GM12878 (cell line): ENCODE measurements at regions of chr19 and their contacts with region 1.

Region 1: DNA sequence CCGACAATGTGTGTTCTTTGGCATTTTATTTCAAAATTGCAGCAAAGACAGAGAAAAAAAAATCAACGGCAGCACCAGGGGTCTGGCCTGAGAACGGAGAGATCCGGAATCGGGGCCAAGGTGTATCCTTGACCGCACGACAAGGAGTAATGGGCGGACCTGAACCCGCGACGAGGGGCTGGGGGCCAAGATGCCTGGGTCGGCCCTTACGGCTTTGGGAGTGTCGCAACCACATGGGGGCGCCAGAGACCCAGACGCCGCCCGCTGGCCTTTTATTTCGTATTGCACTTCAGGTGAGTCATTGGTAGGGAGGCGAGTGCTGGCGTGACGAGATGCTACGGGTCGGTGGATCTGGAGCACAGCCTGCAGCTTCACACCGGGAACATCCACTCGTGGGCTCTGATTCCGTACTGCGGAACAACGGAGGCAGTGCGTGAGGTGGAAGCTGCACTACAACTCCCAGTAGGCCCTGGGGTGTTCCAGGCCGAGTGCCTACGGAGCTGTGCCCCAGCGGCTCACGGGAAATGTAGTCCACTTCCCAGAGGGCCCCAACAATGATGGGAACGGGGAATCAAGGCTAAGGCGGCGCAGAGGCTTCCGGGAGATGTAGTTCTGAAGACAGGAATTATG is 15.7 kb downstream of the BCAT2 start:
- DNase-seq: peak; percentile 76
- ATAC-seq: peak; percentile 98
- H3K4me3 ChIP-seq: peak overlapping the region; percentile 67; the same call in 1 of the 2 replicates
- H3K27ac ChIP-seq: no peak overlapping the region
- H3K4me1 ChIP-seq: peaks cover 6% of the 10 kb centered on the region
- H3K27me3 ChIP-seq: no peaks in the 10 kb centered on the region
- CTCF ChIP-seq: peak; percentile 87 to 93 (median 91); a peak in 5 of 6 replicates
- EP300 ChIP-seq: no peak; a peak in 1 of 4 replicates
- POLR2A ChIP-seq: peak; percentile 62
- RAD21 ChIP-seq: peak; percentile 84

Region 2: DNA sequence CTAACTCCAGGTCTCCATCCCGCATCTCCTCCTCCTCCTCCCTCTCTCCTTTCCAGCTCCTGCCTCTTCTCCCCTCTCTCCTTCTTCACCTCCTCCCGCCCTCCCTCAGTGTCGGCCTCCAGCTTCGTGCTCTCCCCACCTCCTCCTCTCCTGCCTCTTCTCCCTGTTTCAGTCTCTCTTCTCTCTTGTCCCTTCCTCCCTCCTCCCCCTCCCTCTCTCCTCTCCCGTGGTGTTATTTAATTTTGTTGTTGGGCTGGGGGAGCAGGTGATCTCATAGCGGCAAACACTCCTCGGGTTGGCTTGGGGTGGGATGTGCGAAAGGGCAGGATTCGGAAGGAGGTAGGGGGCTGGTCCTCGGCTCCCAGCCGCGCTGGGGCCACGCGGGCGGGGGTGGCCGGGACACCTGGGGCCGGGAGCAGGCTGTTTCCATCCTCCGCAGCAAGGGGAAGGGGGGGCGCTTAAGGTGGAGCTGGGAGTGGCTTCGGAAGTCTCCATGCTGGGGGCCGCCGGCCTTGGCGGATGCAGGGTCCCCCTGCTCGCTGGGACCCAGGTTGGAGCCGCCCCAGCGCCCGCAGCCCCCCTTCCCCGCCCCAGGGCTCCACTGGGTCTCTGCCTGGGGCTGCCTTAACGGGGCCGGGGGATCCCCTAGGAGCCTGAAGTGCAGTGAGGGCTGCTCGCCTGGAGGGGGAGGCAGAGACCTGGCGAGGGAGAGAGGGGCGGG is 149.0 kb before region 1 on chr19 and contains the start of gene CA11:
- CTCF ChIA-PET with region 1: interaction called, 27 read pairs
- POLR2A ChIA-PET with region 1: interaction called, 4 read pairs
- RAD21 ChIA-PET with region 1: interaction called, 9 read pairs
- SMC1A ChIA-PET with region 1: interaction called, 5 read pairs
- in situ Hi-C with region 1: no loop called
- intact Hi-C with region 1: no loop called
- DNase-seq: no peak
- ATAC-seq: peak; percentile 93
- H3K4me3 ChIP-seq: peak within 1 kb of the TSS; percentile 91
- H3K27ac ChIP-seq: peak within 1 kb of the TSS; percentile 15; the same call in 1 of the 2 replicates
- H3K4me1 ChIP-seq: peaks cover 20% of the 10 kb centered on the region
- H3K27me3 ChIP-seq: no peaks in the 10 kb centered on the region
- CTCF ChIP-seq: peak; percentile 79 to 98 (median 96); a peak in 5 of 6 replicates
- EP300 ChIP-seq: no peak
- POLR2A ChIP-seq: peak; percentile 40; the same call in 1 of the 2 replicates
- RAD21 ChIP-seq: peak; percentile 97
- polyA plus RNA-seq, gene CA11: 5.4 to 7.5 TPM

Region 3: DNA sequence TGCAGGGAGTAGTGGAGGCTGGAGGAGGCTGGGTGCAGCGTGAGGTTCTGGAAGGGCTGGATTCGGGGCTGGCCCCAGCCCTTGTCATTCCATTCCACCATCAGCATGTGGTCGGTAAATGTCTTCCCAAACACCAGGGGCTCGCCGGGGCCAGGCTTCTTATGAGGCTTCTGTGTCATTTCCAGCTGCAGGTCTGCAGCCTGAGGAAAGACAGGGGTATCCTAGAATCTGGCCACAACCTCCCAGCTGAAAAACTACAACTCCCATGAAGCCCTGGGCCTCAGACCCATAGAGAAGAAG is 11.3 kb after region 1 on chr19:
- CTCF ChIA-PET with region 1: interaction called, 31 read pairs
- POLR2A ChIA-PET with region 1: interaction called, 8 read pairs
- RAD21 ChIA-PET with region 1: interaction called, 27 read pairs
- SMC1A ChIA-PET with region 1: interaction called, 13 read pairs
- in situ Hi-C with region 1: no loop called
- intact Hi-C with region 1: no loop called
- DNase-seq: no peak
- ATAC-seq: no peak
- H3K4me3 ChIP-seq: no peak overlapping the region
- H3K27ac ChIP-seq: no peak overlapping the region
- H3K4me1 ChIP-seq: no peaks in the 10 kb centered on the region
- H3K27me3 ChIP-seq: no peaks in the 10 kb centered on the region
- CTCF ChIP-seq: no peak
- EP300 ChIP-seq: no peak
- POLR2A ChIP-seq: no peak
- RAD21 ChIP-seq: no peak

Region 4: DNA sequence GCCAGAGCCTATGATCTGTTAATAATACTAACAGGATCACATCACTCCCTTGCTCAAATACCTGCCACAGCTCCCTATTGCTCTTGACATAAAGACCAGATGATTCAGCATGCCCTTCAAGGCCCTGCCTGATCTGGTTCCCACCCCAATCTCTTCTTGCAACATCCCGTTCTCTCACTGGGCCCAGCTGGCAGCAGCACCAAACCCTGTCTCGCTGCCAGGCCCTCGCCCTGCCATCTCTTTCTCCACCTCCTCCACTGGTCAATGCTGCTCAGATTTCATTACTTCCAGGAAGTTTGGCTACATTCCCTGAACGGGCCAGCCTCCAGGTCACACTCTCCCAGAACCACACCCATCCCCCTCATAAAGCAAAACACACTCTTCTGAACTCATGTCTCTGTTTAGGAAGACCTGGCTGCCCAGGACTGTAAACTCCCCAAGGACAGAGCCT is 24.2 kb after region 1 on chr19:
- CTCF ChIA-PET with region 1: interaction called, 10 read pairs
- POLR2A ChIA-PET with region 1: interaction called, 4 read pairs
- RAD21 ChIA-PET with region 1: interaction called, 3 read pairs
- SMC1A ChIA-PET with region 1: interaction called, 7 read pairs
- in situ Hi-C with region 1: no loop called
- intact Hi-C with region 1: no loop called
- DNase-seq: no peak
- ATAC-seq: no peak
- H3K4me3 ChIP-seq: no peak overlapping the region
- H3K27ac ChIP-seq: no peak overlapping the region
- H3K4me1 ChIP-seq: peaks cover 12% of the 10 kb centered on the region; the same call in 1 of the 2 replicates
- H3K27me3 ChIP-seq: no peaks in the 10 kb centered on the region
- CTCF ChIP-seq: no peak
- EP300 ChIP-seq: no peak
- POLR2A ChIP-seq: no peak
- RAD21 ChIP-seq: no peak

Region 5: DNA sequence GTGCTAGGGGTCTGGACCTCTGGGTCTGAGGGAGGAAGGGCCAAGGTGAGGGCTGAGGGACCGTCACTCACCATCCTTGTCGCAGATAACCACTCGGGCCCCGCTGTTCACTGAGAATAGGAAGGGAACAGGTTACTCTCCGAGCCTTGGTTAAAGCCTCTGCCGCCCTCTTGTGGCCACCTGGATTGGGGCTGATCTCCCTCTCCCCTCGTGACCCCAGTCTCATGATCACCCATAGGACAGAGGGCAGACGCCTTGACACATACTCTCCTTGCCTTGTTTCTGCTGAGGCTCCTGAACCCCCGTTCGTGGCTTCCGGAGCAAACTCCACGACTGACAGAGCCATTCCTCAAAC is 40.5 kb after region 1 on chr19:
- CTCF ChIA-PET with region 1: interaction called, 520 read pairs
- POLR2A ChIA-PET with region 1: interaction called, 4 read pairs
- RAD21 ChIA-PET with region 1: interaction called, 72 read pairs
- SMC1A ChIA-PET with region 1: interaction called, 33 read pairs
- in situ Hi-C with region 1: loop called (anchors 5 kb)
- intact Hi-C with region 1: loop called (anchors 1 kb)
- DNase-seq: peak; percentile 82
- ATAC-seq: peak; percentile 97
- H3K4me3 ChIP-seq: peak overlapping the region; percentile 72
- H3K27ac ChIP-seq: 0 out of 2 replicates have a peak overlapping the region, but pooled peaks have one; percentile 14
- H3K4me1 ChIP-seq: peaks cover 15% of the 10 kb centered on the region
- H3K27me3 ChIP-seq: no peaks in the 10 kb centered on the region
- CTCF ChIP-seq: peak; percentile 92 to 98 (median 95)
- EP300 ChIP-seq: no peak
- POLR2A ChIP-seq: peak; percentile 68; the same call in 1 of the 2 replicates
- RAD21 ChIP-seq: peak; percentile 93

Region 6: GRCh38 chr19:48926909-48927308 is 131.7 kb after region 1 on chr19:
- CTCF ChIA-PET with region 1: no interaction called
- POLR2A ChIA-PET with region 1: no interaction called
- RAD21 ChIA-PET with region 1: no interaction called
- SMC1A ChIA-PET with region 1: no interaction called
- in situ Hi-C with region 1: no loop called
- intact Hi-C with region 1: no loop called
- DNase-seq: no peak
- ATAC-seq: no peak
- H3K4me3 ChIP-seq: no peak overlapping the region
- H3K27ac ChIP-seq: no peak overlapping the region
- H3K4me1 ChIP-seq: no peaks in the 10 kb centered on the region
- H3K27me3 ChIP-seq: no peaks in the 10 kb centered on the region
- CTCF ChIP-seq: no peak
- EP300 ChIP-seq: no peak
- POLR2A ChIP-seq: no peak
- RAD21 ChIP-seq: no peak

Region 7: GRCh38 chr19:48970923-48971395 is 175.8 kb after region 1 on chr19:
- CTCF ChIA-PET with region 1: interaction called, 40 read pairs
- POLR2A ChIA-PET with region 1: interaction called, 5 read pairs
- RAD21 ChIA-PET with region 1: interaction called, 20 read pairs
- SMC1A ChIA-PET with region 1: interaction called, 9 read pairs
- in situ Hi-C with region 1: loop called (anchors 5 kb)
- intact Hi-C with region 1: no loop called
- DNase-seq: no peak
- ATAC-seq: peak; percentile 85
- H3K4me3 ChIP-seq: no peak overlapping the region
- H3K27ac ChIP-seq: 0 out of 2 replicates have a peak overlapping the region, but pooled peaks have one; percentile 13
- H3K4me1 ChIP-seq: peaks cover 17% of the 10 kb centered on the region
- H3K27me3 ChIP-seq: no peaks in the 10 kb centered on the region
- CTCF ChIP-seq: peak; percentile 92 to 97 (median 94)
- EP300 ChIP-seq: no peak
- POLR2A ChIP-seq: no peak
- RAD21 ChIP-seq: peak; percentile 86